ENCODE measurements at regions of chr22 and their contacts with region 1.

Region 1: DNA sequence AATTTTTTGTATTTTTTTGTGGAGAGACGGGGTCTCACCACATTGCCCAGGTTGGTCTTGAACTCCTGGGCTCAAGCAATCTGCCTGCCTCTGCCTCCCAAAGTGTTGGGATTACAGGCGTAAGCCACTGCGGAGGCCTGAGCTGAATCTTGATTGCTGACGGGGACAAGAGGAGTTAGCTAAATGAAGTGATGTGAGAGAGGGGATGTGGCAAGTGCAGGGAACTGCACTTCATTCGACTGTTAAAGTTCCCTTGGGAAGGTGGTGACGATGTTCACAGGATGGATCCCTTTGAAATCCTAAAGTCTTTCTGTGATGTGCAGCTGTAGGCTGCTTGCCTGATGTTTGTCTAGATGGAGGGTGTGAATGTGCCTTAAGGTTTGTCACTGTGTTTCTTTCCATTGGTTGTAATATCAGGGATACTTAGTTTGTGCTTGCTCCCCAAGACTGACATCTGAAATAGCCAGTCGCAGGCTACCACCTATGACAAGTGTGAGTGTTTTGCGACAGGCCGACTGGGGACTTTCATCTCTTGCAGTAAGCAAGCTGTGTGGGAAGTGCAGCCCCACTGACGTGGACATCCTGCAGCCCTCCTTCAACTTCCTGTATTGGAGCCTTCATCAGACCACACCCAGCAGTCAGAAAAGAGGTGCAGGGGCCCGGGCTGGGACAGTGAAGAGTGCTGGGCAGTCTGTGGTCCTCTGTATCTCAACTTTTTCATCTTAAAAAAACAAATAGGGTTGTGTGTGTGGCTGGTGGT is 19.6 kb upstream of the CCDC134 start:
- DNase-seq: peak; percentile 82 to 98
- ATAC-seq: peak; percentile 92 to 99 (median 95)
- H3K4me3 ChIP-seq: peak overlapping the region; percentile 58
- H3K4me3 Mint-ChIP-seq: peak overlapping the region; percentile 82
- H3K27ac ChIP-seq: peak overlapping the region; percentile 96
- H3K27ac Mint-ChIP-seq: peak overlapping the region; percentile 98 to 99
- H3K4me1 ChIP-seq: peaks cover 36% of the 10 kb centered on the region
- H3K4me1 Mint-ChIP-seq: peaks cover 41 to 43% of the 10 kb centered on the region in 2 donors
- H3K27me3 ChIP-seq: no peaks in the 10 kb centered on the region
- H3K27me3 Mint-ChIP-seq: no peaks in the 10 kb centered on the region
- CTCF ChIP-seq: no peak

Region 2: GRCh38 chr22:41800348-41801146 is 19.6 kb after region 1 on chr22 and contains the start of gene CCDC134:
- intact Hi-C with region 1: loop called (anchors 1 kb)
- DNase-seq: peak; percentile 91 to 94
- ATAC-seq: peak; percentile 96 to 98 (median 98)
- H3K4me3 ChIP-seq: peak within 1 kb of the TSS; percentile 96
- H3K4me3 Mint-ChIP-seq: peak within 1 kb of the TSS; percentile 96
- H3K27ac ChIP-seq: peak within 1 kb of the TSS; percentile 92
- H3K27ac Mint-ChIP-seq: peak within 1 kb of the TSS; percentile 93 to 96
- H3K4me1 ChIP-seq: peaks cover 21% of the 10 kb centered on the region
- H3K4me1 Mint-ChIP-seq: peaks cover 24 to 36% of the 10 kb centered on the region in 2 donors
- H3K27me3 ChIP-seq: no peaks in the 10 kb centered on the region
- H3K27me3 Mint-ChIP-seq: no peaks in the 10 kb centered on the region
- CTCF ChIP-seq: no peak
- total RNA-seq, gene CCDC134: 16.4 to 22.1 (median 16.7) TPM

Measured in natural killer cell (primary cell).